HepG2 (cell line): ENCODE measurements at regions of chr14 and their contacts with region 1.

Region 1: GRCh38 chr14:63543000-63543825 is at the start of gene PPP2R5E:
- DNase-seq: peak; percentile 97
- ATAC-seq: peak; percentile 97
- H3K4me3 ChIP-seq: peak within 1 kb of the TSS; percentile 87 to 91 (median 88)
- H3K27ac ChIP-seq: peak within 1 kb of the TSS; percentile 88
- H3K4me1 ChIP-seq: peaks cover 33% of the 10 kb centered on the region
- H3K27me3 ChIP-seq: no peaks in the 10 kb centered on the region; a peak in 1 of 5 replicates
- CTCF ChIP-seq: 0 out of 2 replicates have a peak, but pooled peaks have one; percentile 6
- EP300 ChIP-seq: no peak
- POLR2A ChIP-seq: peak; percentile 79 to 80
- RAD21 ChIP-seq: peak; percentile 19; the same call in 1 of the 2 replicates
- total RNA-seq, gene PPP2R5E: 11.0 and 22.5 TPM in 2 replicates

Region 2: GRCh38 chr14:63457498-63457897 is 85.7 kb before region 1 on chr14:
- CTCF ChIA-PET with region 1: no interaction called
- POLR2A ChIA-PET with region 1: interaction called, 4 read pairs
- in situ Hi-C with region 1: no loop called
- intact Hi-C with region 1: loop called (anchors 2 kb)
- DNase-seq: peak; percentile 60
- ATAC-seq: peak; percentile 90
- H3K4me3 ChIP-seq: no peak overlapping the region
- H3K27ac ChIP-seq: peak overlapping the region; percentile 15
- H3K4me1 ChIP-seq: peaks cover 18% of the 10 kb centered on the region
- H3K27me3 ChIP-seq: no peaks in the 10 kb centered on the region
- CTCF ChIP-seq: peak; percentile 79
- EP300 ChIP-seq: 0 out of 4 replicates have a peak, but pooled peaks of 1 of the 2 experiments have one; percentile 25
- POLR2A ChIP-seq: no peak
- RAD21 ChIP-seq: peak; percentile 45; the same call in 1 of the 2 replicates

Region 3: GRCh38 chr14:63470962-63471793 is 72.0 kb before region 1 on chr14:
- CTCF ChIA-PET with region 1: no interaction called
- POLR2A ChIA-PET with region 1: interaction called, 9 read pairs
- in situ Hi-C with region 1: no loop called
- intact Hi-C with region 1: loop called (anchors 5 kb)
- DNase-seq: peak; percentile 87
- ATAC-seq: peak; percentile 76
- H3K4me3 ChIP-seq: peak overlapping the region in 2 of 3 experiments; percentile 14 to 34; a peak in 2 of 6 replicates
- H3K27ac ChIP-seq: peak overlapping the region; percentile 90
- H3K4me1 ChIP-seq: peaks cover 90% of the 10 kb centered on the region
- H3K27me3 ChIP-seq: no peaks in the 10 kb centered on the region
- CTCF ChIP-seq: no peak
- EP300 ChIP-seq: peak in 1 of 2 experiments; percentile 82; a peak in 2 of 4 replicates
- POLR2A ChIP-seq: no peak
- RAD21 ChIP-seq: no peak

Region 4: GRCh38 chr14:63641473-63642228 is 98.4 kb after region 1 on chr14 and contains the start of gene WDR89:
- CTCF ChIA-PET with region 1: no interaction called
- POLR2A ChIA-PET with region 1: interaction called, 19 read pairs
- in situ Hi-C with region 1: no loop called
- intact Hi-C with region 1: loop called (anchors 5 kb)
- DNase-seq: peak; percentile 99
- ATAC-seq: peak; percentile 96
- H3K4me3 ChIP-seq: peak within 1 kb of the TSS; percentile 66 to 77 (median 74)
- H3K27ac ChIP-seq: peak within 1 kb of the TSS; percentile 95
- H3K4me1 ChIP-seq: peaks cover 40% of the 10 kb centered on the region
- H3K27me3 ChIP-seq: no peaks in the 10 kb centered on the region
- CTCF ChIP-seq: peak; percentile 73
- EP300 ChIP-seq: 0 out of 4 replicates have a peak, but pooled peaks of 1 of the 2 experiments have one; percentile 12
- POLR2A ChIP-seq: peak; percentile 75 to 91
- RAD21 ChIP-seq: peak; percentile 69
- total RNA-seq, gene WDR89: 20.1 and 37.0 TPM in 2 replicates

Region 5: DNA sequence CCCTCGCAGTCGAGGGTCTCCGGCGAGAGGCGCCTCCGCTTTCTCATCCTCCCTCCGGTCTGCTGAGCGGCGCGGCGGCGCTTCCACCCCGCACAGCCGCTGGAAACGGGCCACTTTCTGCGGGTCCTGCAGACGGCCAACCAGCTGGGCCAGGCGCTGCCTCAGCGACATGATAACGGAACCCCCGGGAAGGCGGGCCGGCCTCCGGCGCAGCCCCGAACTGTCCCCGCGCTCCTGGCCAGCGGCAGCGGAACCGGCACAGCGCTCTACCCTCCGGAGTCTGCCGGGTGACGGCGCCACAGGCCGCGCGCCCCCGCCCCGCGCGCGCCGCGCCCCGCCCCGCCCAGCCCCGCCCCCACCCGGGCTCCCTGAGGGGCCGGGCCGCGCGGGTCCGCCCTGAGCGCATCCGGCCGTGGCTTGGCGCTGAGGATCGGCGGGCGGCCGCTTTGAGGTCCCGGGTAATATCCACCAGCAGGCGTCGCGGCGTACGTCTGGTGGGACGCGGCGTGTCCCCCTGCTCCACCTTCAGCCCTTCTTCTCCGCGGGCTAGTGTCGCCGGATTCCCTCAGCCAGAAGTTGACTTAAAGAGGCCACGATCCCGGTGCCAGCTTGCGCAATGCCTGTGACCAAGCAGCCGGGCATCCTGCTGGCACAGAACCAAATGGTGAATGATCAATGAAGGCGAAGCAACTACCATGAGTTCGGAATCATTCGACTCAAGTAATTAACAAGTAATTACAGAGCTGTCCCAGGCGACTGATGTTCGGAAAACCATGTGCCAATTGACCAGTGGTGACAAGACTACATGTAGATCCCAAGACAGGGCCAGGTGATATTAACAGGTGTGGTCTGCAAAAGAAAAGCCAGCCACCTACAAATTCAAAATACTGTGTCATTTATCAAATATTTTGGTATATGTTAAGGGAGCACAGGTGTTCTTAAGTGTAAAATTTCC is 184.8 kb after region 1 on chr14 and contains the start of gene SGPP1:
- CTCF ChIA-PET with region 1: no interaction called
- POLR2A ChIA-PET with region 1: interaction called, 5 read pairs
- in situ Hi-C with region 1: no loop called
- intact Hi-C with region 1: loop called (anchors 5 kb)
- DNase-seq: peak; percentile 65
- ATAC-seq: peak; percentile 87
- H3K4me3 ChIP-seq: peak within 1 kb of the TSS; percentile 70 to 92 (median 90)
- H3K27ac ChIP-seq: peak within 1 kb of the TSS; percentile 60
- H3K4me1 ChIP-seq: peaks cover 43% of the 10 kb centered on the region
- H3K27me3 ChIP-seq: no peaks in the 10 kb centered on the region
- CTCF ChIP-seq: peak; percentile 76
- EP300 ChIP-seq: no peak
- POLR2A ChIP-seq: peak; percentile 32 to 69; a peak in 3 of 4 replicates
- RAD21 ChIP-seq: peak; percentile 42; the same call in 1 of the 2 replicates
- total RNA-seq, gene SGPP1: 4.8 and 6.4 TPM in 2 replicates